ENCODE measurements at regions of chr20 and their contacts with region 1.

Region 1: DNA sequence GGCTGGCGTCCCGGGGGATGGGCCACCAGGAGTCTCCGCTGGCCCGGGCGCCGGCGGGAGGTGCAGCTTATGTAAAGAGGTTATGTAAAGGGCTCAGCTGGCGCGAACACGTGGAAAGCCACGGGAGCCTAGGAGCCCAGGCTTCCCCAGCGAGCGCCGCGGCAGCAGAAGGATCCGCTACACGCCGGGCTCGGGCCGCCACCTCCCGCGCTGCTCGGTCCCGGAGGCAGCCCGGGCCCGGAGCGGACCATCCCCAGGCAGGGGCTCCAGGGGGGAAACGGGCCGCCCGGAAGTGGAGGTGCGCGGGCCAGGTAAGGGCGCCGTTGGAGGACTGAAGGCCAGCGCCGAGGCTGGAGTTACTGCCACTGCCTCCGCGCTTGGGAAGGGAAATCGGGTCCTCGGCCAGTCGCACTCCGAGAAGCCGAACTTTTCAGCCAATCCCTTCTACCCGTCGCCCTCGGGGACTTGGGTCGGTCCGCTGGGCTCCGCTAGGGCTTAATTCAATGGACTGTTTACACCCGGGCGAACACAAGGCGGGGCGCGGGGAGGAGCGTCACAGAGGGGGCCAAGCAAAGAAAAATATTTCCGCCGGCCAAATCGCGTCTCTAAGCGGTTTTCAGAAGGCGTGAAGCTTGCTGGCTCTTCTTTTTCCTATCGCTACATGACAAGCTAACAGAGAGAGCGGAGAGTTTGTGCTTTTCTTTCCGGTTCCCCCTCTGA is 398 bp downstream of the STK35 start:
- DNase-seq: peak; percentile 84 to 95 (median 87)
- ATAC-seq: peak; percentile 75
- H3K4me3 ChIP-seq: peak overlapping the region; percentile 89
- H3K4me3 Mint-ChIP-seq: peak overlapping the region; percentile 99
- H3K27ac ChIP-seq: peak overlapping the region; percentile 96 to 99
- H3K27ac Mint-ChIP-seq: peak overlapping the region; percentile 100
- H3K4me1 ChIP-seq: peaks cover 37% of the 10 kb centered on the region
- H3K4me1 Mint-ChIP-seq: peaks cover 48% of the 10 kb centered on the region
- H3K27me3 ChIP-seq: no peaks in the 10 kb centered on the region
- H3K27me3 Mint-ChIP-seq: peaks cover 4% of the 10 kb centered on the region
- CTCF ChIP-seq: no peak

Region 2: DNA sequence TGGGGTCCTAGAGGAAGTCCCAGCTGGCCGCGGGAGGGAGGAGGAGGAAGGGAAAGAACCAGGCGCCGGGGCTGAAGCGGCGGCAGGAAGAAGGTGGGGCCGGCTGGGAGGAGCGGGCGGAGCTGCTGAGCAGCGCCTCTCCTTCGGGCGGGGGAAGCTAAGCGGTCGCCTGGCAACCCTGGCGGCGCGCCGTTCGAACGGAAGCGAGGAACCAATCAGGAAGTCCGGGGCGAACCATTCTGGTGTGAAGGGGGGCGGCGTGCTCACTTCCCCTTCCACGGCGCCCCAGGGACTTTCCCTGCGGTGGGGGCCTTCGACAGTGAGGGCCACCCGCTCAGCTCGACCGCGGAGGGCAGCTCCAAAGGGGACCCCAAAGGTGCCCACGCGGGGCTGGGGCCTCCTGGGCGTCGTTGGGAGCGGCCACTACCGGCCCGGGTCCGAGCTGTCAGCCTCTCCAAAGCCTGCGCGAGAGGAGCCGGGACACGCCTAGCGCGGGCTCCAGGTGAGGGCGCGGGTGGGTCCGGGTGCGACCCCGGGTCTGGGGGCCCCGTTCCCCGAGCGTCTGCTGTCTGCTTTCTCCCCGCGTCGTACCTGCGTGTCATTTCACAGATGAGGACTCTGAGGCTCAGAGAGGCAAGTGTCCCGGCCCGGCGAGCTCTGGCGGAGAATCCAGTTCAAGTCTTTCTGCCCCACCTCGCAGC is 1268.4 kb before region 1 on chr20 and contains the start of gene FAM110A:
- CTCF ChIA-PET with region 1: no interaction called
- POLR2A ChIA-PET with region 1: interaction called, 3 read pairs
- intact Hi-C with region 1: loop called (anchors 5 kb)
- DNase-seq: peak; percentile 91 to 98 (median 94)
- ATAC-seq: peak; percentile 93
- H3K4me3 ChIP-seq: peak within 1 kb of the TSS; percentile 74
- H3K4me3 Mint-ChIP-seq: peak within 1 kb of the TSS; percentile 92
- H3K27ac ChIP-seq: peak within 1 kb of the TSS; percentile 83 to 93
- H3K27ac Mint-ChIP-seq: peak within 1 kb of the TSS; percentile 87
- H3K4me1 ChIP-seq: peaks cover 40% of the 10 kb centered on the region
- H3K4me1 Mint-ChIP-seq: peaks cover 50% of the 10 kb centered on the region
- H3K27me3 ChIP-seq: no peaks in the 10 kb centered on the region
- H3K27me3 Mint-ChIP-seq: no peaks in the 10 kb centered on the region
- CTCF ChIP-seq: no peak
- total RNA-seq, gene FAM110A: 4.5 to 4.8 TPM

Region 3: DNA sequence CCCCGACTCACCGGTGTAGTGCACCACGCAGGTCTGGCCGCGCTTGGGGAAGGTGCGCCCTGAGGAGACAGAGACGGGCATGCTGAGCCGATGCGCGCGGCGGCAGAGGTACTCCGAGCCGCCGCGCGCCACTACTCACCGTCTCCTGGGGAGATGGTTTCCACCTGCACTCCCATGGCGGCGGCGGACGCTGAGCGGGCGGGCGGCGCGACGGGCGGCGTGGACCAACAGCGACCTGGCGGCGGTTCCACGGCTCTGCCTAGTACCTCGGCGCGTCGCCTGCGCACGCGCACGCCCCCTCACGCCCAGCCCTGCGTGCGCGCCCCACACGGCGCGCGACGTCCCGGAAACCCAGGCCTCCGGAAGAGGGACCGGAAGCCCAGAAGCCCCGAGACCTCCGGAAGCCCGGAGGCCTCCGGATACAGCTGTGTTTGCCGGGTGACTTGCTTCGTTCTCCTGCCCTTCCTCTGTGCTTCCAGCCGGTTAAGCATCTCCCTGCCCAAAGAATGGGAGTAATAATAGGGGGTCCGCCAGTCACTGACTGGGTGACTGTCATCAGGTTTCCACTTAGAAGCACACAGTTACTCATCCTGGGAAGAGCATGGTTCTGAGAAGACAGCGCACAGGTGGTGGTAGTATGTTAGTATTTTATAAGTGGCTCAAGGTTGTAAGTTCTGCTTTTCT is 709.1 kb before region 1 on chr20 and contains the start of gene FKBP1A:
- CTCF ChIA-PET with region 1: no interaction called
- POLR2A ChIA-PET with region 1: no interaction called
- intact Hi-C with region 1: loop called in 1 of 2 experiments (anchors 10 kb)
- DNase-seq: peak; percentile 84 to 97 (median 92)
- ATAC-seq: peak; percentile 83
- H3K4me3 ChIP-seq: peak within 1 kb of the TSS; percentile 85
- H3K4me3 Mint-ChIP-seq: peak within 1 kb of the TSS; percentile 98
- H3K27ac ChIP-seq: peak within 1 kb of the TSS; percentile 37 to 72
- H3K27ac Mint-ChIP-seq: peak within 1 kb of the TSS; percentile 89
- H3K4me1 ChIP-seq: peaks cover 60% of the 10 kb centered on the region
- H3K4me1 Mint-ChIP-seq: peaks cover 61% of the 10 kb centered on the region
- H3K27me3 ChIP-seq: no peaks in the 10 kb centered on the region
- H3K27me3 Mint-ChIP-seq: no peaks in the 10 kb centered on the region
- CTCF ChIP-seq: no peak
- total RNA-seq, gene FKBP1A: 43.3 to 45.4 TPM

Region 4: GRCh38 chr20:2112910-2113309 is 10.9 kb after region 1 on chr20:
- CTCF ChIA-PET with region 1: interaction called, 4 read pairs
- POLR2A ChIA-PET with region 1: interaction called, 12 read pairs
- intact Hi-C with region 1: no loop called
- DNase-seq: no peak
- ATAC-seq: no peak
- H3K4me3 ChIP-seq: no peak overlapping the region
- H3K4me3 Mint-ChIP-seq: no peak overlapping the region
- H3K27ac ChIP-seq: no peak overlapping the region
- H3K27ac Mint-ChIP-seq: no peak overlapping the region
- H3K4me1 ChIP-seq: peaks cover 52% of the 10 kb centered on the region
- H3K4me1 Mint-ChIP-seq: peaks cover 89% of the 10 kb centered on the region
- H3K27me3 ChIP-seq: no peaks in the 10 kb centered on the region
- H3K27me3 Mint-ChIP-seq: no peaks in the 10 kb centered on the region
- CTCF ChIP-seq: no peak

Region 5: DNA sequence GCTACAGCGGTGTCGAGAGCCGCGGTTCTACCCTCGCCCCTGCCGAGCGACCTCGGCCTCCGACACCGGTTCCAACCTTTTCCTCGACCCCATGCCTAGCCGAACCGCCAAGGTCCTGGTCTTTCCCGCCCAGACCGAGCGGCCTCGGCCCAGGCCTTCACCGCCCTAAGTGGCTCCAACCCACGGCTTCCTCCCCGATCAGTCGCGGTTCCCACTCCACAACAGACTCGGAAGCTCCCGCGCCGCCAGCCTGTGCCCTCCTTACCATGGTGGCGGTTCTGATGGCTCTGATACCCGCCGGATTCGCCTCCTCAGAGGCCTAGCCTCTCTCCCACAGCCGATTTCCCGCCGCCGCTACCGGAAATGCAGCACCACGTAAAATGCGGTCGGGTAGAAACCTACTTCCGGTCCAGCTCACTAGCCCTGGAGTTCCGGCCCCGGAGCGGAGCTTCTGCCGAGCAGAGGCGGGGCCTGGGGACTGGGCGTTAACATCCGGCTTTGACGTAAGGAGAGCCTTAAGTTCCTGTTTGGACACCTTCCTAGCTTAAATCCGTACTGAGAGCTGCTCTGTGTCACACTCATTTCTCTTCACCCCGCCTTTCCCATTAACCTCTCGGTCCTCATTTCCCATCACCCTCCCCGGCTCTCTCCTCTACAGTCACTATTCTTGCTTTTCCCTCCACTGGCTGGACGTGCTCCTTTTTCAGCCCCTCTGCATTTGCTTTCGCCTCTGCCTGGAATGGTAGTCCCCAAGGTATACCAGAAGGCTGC is 368.6 kb after region 1 on chr20 and contains the start of gene SNRPB:
- CTCF ChIA-PET with region 1: no interaction called
- POLR2A ChIA-PET with region 1: interaction called, 16 read pairs
- intact Hi-C with region 1: loop called in 1 of 2 experiments (anchors 2 kb)
- DNase-seq: peak; percentile 94 to 99 (median 95)
- ATAC-seq: peak; percentile 93
- H3K4me3 ChIP-seq: peak within 1 kb of the TSS; percentile 90
- H3K4me3 Mint-ChIP-seq: peak within 1 kb of the TSS; percentile 98
- H3K27ac ChIP-seq: peak within 1 kb of the TSS; percentile 91 to 96
- H3K27ac Mint-ChIP-seq: peak within 1 kb of the TSS; percentile 98
- H3K4me1 ChIP-seq: peaks cover 23% of the 10 kb centered on the region
- H3K4me1 Mint-ChIP-seq: peaks cover 54% of the 10 kb centered on the region
- H3K27me3 ChIP-seq: no peaks in the 10 kb centered on the region
- H3K27me3 Mint-ChIP-seq: no peaks in the 10 kb centered on the region
- CTCF ChIP-seq: no peak
- total RNA-seq, gene SNRPB: 146 to 147 TPM

Measured in CD4-positive, alpha-beta T cell (primary cell).